Calu3 (cell line): ENCODE measurements at regions of chr17 and their contacts with region 1.

Region 1: DNA sequence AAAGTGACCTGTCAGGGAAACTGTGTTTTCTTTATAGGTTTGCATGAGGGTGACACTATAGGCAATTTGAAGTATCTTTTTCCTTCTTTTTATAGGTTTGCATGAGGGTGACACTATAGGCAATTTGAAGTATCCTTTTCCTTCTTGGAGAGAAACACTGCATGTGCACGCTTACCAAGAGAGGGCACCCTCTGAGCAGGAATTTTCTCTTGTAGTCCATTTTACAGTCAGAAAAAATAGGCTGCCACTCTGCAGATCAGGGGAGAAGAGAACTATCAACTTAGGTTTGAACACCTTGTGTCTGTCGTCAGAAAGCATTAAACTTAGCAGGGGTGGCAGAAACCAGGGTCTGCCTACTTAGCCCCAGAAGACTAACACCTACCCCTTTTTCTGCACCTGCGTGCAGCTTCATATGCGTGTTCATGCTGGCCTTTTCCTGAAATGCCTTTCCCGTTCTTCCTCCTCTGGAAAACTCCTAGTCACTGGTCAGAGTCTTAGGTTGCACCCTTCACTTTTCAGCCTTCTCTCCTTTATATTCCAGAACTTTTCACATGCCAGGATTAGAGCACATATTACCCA is 16.4 kb upstream of the SMIM36 start:
- DNase-seq: peak; percentile 41
- H3K4me3 Mint-ChIP-seq: no peak overlapping the region
- H3K27ac Mint-ChIP-seq: no peak overlapping the region
- H3K4me1 Mint-ChIP-seq: no peaks in the 10 kb centered on the region
- H3K27me3 Mint-ChIP-seq: no peaks in the 10 kb centered on the region
- CTCF ChIP-seq: no peak

Region 2: GRCh38 chr17:55513885-55514591 is 13.6 kb before region 1 on chr17:
- CTCF ChIA-PET with region 1: no interaction called
- intact Hi-C with region 1: no loop called
- DNase-seq: peak; percentile 68
- H3K4me3 Mint-ChIP-seq: no peak overlapping the region
- H3K27ac Mint-ChIP-seq: no peak overlapping the region
- H3K4me1 Mint-ChIP-seq: peaks cover 8% of the 10 kb centered on the region
- H3K27me3 Mint-ChIP-seq: no peaks in the 10 kb centered on the region
- CTCF ChIP-seq: peak; percentile 34

Region 3: GRCh38 chr17:55601874-55602364 is 74.3 kb after region 1 on chr17:
- CTCF ChIA-PET with region 1: interaction called, 14 read pairs
- intact Hi-C with region 1: loop called (anchors 1 kb)
- DNase-seq: peak; percentile 44
- H3K4me3 Mint-ChIP-seq: no peak overlapping the region
- H3K27ac Mint-ChIP-seq: no peak overlapping the region
- H3K4me1 Mint-ChIP-seq: no peaks in the 10 kb centered on the region
- H3K27me3 Mint-ChIP-seq: no peaks in the 10 kb centered on the region
- CTCF ChIP-seq: peak; percentile 59

Region 4: GRCh38 chr17:55770148-55770870 is 242.7 kb after region 1 on chr17:
- CTCF ChIA-PET with region 1: interaction called, 6 read pairs
- intact Hi-C with region 1: loop called (anchors 1 kb)
- DNase-seq: no peak
- H3K4me3 Mint-ChIP-seq: no peak overlapping the region
- H3K27ac Mint-ChIP-seq: no peak overlapping the region
- H3K4me1 Mint-ChIP-seq: peaks cover 10% of the 10 kb centered on the region
- H3K27me3 Mint-ChIP-seq: no peaks in the 10 kb centered on the region
- CTCF ChIP-seq: peak; percentile 32

Region 5: GRCh38 chr17:56319517-56319916 is 791.9 kb after region 1 on chr17:
- CTCF ChIA-PET with region 1: no interaction called
- intact Hi-C with region 1: loop called (anchors 10 kb)
- DNase-seq: no peak
- H3K4me3 Mint-ChIP-seq: no peak overlapping the region
- H3K27ac Mint-ChIP-seq: no peak overlapping the region
- H3K4me1 Mint-ChIP-seq: no peaks in the 10 kb centered on the region
- H3K27me3 Mint-ChIP-seq: peaks cover 29% of the 10 kb centered on the region
- CTCF ChIP-seq: peak; percentile 26